AG04449 (cell line): ENCODE measurements at regions of chr16 and their contacts with region 1.

Region 1: DNA sequence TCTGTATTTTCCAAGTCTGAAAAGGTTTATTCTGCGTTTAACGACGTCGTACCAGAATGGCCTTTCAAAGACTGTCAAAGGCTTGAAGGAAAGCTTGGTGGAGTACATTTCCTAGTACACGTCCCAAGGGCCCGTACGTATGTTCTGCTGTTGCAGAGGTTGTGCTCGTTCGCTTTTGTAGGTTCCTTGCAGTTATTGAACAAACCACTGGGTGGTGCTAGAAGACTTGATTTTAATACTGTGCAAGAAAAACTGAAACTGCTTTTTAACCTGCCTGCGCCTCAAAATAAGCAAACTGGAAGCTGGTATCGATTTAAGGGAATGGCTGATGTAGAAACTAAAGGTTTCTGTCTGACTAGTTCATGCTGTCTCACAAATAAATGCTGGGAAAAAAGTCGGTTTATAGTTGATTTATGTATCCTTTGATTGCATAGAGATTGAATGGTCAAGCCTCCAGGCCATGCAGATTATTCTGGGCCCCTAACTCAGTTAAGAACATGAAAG is 54.6 kb downstream of the USP10 start:
- DNase-seq: peak; percentile 67
- H3K4me3 ChIP-seq: no peak overlapping the region
- CTCF ChIP-seq: peak; percentile 56

Region 2: DNA sequence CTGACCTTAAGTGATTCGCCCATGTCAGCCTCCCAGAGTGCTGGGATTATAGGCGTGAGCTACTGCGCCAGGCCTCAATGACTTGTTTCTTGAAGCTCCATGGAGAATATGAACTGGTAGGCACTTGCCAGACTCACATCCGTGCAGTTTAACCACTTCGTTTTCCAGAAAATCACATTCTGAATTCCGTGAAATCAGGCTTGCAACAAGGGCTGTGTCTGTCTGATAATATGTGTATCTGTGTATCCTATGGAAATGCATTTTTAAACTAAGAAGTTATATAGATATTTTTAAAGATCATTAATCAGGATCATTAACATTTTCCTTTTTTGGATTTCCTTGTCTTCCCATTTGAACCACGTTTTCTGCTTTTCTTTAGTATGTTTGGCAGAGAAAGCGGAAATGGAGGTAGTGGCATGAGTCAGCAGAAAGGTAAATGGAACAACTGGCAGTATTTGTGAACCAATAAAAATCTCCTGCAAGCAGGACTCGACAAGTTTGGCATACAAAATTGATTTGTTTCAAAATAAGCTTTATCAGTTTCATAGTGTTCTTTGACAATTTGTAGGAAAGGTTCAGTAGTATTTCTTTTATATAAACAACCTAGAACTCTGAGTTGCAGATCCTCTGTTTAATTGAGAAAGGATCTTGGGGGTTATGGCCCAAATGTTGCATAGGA is 21.6 kb before region 1 on chr16:
- CTCF ChIA-PET with region 1: interaction called, 147 read pairs
- POLR2A ChIA-PET with region 1: interaction called, 4 read pairs
- DNase-seq: no peak
- H3K4me3 ChIP-seq: no peak overlapping the region
- CTCF ChIP-seq: no peak

Region 3: GRCh38 chr16:84925092-84925772 is 170.8 kb after region 1 on chr16:
- CTCF ChIA-PET with region 1: interaction called, 18 read pairs
- POLR2A ChIA-PET with region 1: no interaction called
- DNase-seq: no peak
- H3K4me3 ChIP-seq: no peak overlapping the region
- CTCF ChIP-seq: peak; percentile 72

Region 4: GRCh38 chr16:84947022-84947421 is 192.6 kb after region 1 on chr16:
- CTCF ChIA-PET with region 1: interaction called, 492 read pairs
- POLR2A ChIA-PET with region 1: no interaction called
- DNase-seq: no peak
- H3K4me3 ChIP-seq: no peak overlapping the region
- CTCF ChIP-seq: no peak

Region 5: DNA sequence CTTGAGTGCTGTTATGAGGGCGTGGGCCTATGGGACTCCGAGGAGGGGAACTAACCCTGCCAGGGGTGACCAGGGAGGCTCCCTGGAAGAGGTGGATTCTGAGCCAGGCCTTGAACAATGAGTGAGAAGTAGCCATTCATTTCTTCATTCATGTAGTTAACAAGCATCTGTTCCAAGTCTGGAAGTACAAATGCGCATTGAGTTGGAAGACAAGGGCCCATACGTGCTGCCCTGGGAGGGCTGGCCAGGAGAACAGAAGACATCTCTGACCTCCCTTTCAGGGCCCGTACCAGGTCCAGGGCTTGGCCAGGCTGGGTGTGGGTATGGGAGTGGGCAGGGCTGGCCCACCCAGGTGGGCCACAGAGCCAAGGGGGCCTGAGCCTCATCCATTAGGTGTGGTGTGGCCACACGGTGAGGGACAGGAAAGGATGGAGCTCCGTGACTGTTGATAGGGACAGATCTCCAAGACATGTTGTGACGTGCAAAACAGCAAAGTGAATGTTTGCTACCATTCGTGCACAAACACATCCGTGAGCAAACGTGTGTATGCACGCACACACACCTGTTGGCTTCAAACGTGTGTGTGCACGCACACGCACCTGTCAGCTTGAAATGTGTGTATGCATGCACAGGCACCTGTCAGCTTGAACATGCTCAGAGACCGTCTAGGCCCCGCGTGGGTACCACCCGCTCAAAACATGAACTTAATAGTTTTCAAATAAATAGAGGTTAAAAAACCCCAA is 210.2 kb after region 1 on chr16:
- CTCF ChIA-PET with region 1: interaction called, 492 read pairs
- POLR2A ChIA-PET with region 1: interaction called, 3 read pairs
- DNase-seq: no peak
- H3K4me3 ChIP-seq: no peak overlapping the region
- CTCF ChIP-seq: no peak